Naive thymus-derived CD4-positive, alpha-beta T cell (primary cell): ENCODE measurements at regions of chr11 and their contacts with region 1.

Region 1: GRCh38 chr11:78325274-78325781 is 92.3 kb downstream of the GAB2 start:
- DNase-seq: peak in 6 of 9 donors; percentile 29 to 63 (median 42)
- ATAC-seq: peak; percentile 88
- H3K4me3 ChIP-seq: no peak overlapping the region
- H3K4me3 Mint-ChIP-seq: peak overlapping the region in 1 of 10 donors; percentile 63
- H3K27ac ChIP-seq: no peak overlapping the region
- H3K27ac Mint-ChIP-seq: peak overlapping the region in 5 of 9 donors; percentile 15 to 91 (median 47)
- H3K4me1 ChIP-seq: peaks cover 0 to 6% of the 10 kb centered on the region in 2 donors
- H3K4me1 Mint-ChIP-seq: peaks cover 3 to 83% (median 18%) of the 10 kb centered on the region in 7 donors
- H3K27me3 ChIP-seq: no peaks in the 10 kb centered on the region
- H3K27me3 Mint-ChIP-seq: no peaks in the 10 kb centered on the region

Region 2: GRCh38 chr11:78228467-78228866 is 96.9 kb before region 1 on chr11:
- CTCF ChIA-PET with region 1: no interaction called
- POLR2A ChIA-PET with region 1: no interaction called
- intact Hi-C with region 1: loop called in 1 of 2 experiments (anchors 2 kb)
- DNase-seq: peak in 2 of 9 donors; percentile 18 to 21
- ATAC-seq: peak; percentile 76
- H3K4me3 ChIP-seq: no peak overlapping the region
- H3K4me3 Mint-ChIP-seq: no peak overlapping the region
- H3K27ac ChIP-seq: no peak overlapping the region
- H3K27ac Mint-ChIP-seq: peak overlapping the region in 2 of 9 donors; percentile 57 to 65
- H3K4me1 ChIP-seq: no peaks in the 10 kb centered on the region
- H3K4me1 Mint-ChIP-seq: peaks cover 6 to 61% (median 9%) of the 10 kb centered on the region in 7 donors
- H3K27me3 ChIP-seq: no peaks in the 10 kb centered on the region
- H3K27me3 Mint-ChIP-seq: no peaks in the 10 kb centered on the region

Region 3: GRCh38 chr11:78312712-78313111 is 12.6 kb before region 1 on chr11:
- CTCF ChIA-PET with region 1: no interaction called
- POLR2A ChIA-PET with region 1: no interaction called
- intact Hi-C with region 1: loop called in 1 of 2 experiments (anchors 1 kb)
- DNase-seq: no peak
- ATAC-seq: no peak
- H3K4me3 ChIP-seq: no peak overlapping the region
- H3K4me3 Mint-ChIP-seq: peak overlapping the region in 1 of 10 donors; percentile 43
- H3K27ac ChIP-seq: no peak overlapping the region
- H3K27ac Mint-ChIP-seq: peak overlapping the region in 1 of 9 donors; percentile 51
- H3K4me1 ChIP-seq: no peaks in the 10 kb centered on the region
- H3K4me1 Mint-ChIP-seq: peaks cover 0 to 77% (median 7%) of the 10 kb centered on the region in 7 donors
- H3K27me3 ChIP-seq: peaks cover 0 to 3% of the 10 kb centered on the region in 2 donors
- H3K27me3 Mint-ChIP-seq: no peaks in the 10 kb centered on the region

Region 4: DNA sequence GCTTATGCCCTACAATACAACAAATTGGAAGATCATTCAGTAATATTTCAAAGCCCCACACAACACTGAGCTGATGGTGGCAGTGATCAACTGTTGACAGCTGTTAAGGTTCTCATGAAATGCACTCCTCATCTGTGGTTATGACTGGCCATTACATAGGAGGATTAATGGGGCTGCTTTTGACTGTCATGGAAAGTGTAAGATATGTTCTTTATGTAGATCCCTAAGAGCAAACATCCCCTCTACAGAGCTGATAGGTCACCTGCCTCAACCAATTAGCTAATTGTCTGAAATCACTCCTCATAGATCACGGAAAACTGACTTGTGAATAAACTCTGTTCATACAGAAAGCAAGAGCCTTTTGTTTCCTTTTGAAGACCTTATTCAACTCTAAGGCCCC is 14.2 kb after region 1 on chr11:
- CTCF ChIA-PET with region 1: no interaction called
- POLR2A ChIA-PET with region 1: no interaction called
- intact Hi-C with region 1: loop called in 1 of 2 experiments (anchors 1 kb)
- DNase-seq: no peak
- ATAC-seq: no peak
- H3K4me3 ChIP-seq: no peak overlapping the region
- H3K4me3 Mint-ChIP-seq: peak overlapping the region in 1 of 10 donors; percentile 71
- H3K27ac ChIP-seq: no peak overlapping the region
- H3K27ac Mint-ChIP-seq: peak overlapping the region in 1 of 9 donors; percentile 95
- H3K4me1 ChIP-seq: no peaks in the 10 kb centered on the region
- H3K4me1 Mint-ChIP-seq: peaks cover 0 to 82% (median 7%) of the 10 kb centered on the region in 7 donors
- H3K27me3 ChIP-seq: no peaks in the 10 kb centered on the region
- H3K27me3 Mint-ChIP-seq: peaks cover 0 to 14% (median 7%) of the 10 kb centered on the region in 5 donors